SK-N-SH (cell line): ENCODE measurements at regions of chr10 and their contacts with region 1.

Region 1: DNA sequence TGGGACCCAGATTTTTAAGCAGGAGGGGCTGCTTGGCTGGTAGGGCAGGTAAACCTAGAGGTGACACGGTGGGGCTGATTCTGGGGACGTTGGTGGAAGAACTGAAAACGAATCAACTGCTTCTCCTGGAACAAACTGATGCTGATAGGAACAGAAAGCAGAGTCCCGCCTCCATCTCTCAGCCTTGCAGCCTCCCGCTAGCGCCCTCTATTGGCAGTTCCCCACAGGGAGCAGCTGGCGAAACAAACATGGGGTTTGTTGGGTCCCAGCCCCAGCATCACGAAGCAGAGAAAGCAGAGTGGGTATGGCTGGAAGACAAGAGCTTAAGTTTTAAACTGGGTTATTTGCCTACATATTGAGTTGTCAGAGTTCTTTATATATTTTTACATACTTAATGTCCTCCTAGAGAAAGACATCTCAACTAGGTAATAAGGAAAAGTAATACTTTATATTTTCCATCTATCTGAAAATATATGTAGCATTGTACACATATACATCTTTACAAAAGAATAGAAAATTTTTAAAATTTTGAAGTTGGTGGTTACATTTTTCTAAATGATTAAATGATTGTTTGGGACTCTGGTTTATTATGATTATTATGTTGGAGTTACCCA is 42.3 kb upstream of the FOXI2 start:
- DNase-seq: peak; percentile 65
- H3K4me3 ChIP-seq: peak overlapping the region in 1 of 2 experiments; percentile 29; a peak in 1 of 4 replicates
- H3K27ac ChIP-seq: no peak overlapping the region
- H3K4me1 ChIP-seq: no peaks in the 10 kb centered on the region
- H3K27me3 ChIP-seq: no peaks in the 10 kb centered on the region
- CTCF ChIP-seq: peak; percentile 61
- EP300 ChIP-seq: no peak
- RAD21 ChIP-seq: peak; percentile 48

Region 2: GRCh38 chr10:127063762-127064161 is 630.9 kb before region 1 on chr10:
- CTCF ChIA-PET with region 1: no interaction called
- POLR2A ChIA-PET with region 1: no interaction called
- DNase-seq: no peak
- H3K4me3 ChIP-seq: no peak overlapping the region
- H3K27ac ChIP-seq: no peak overlapping the region
- H3K4me1 ChIP-seq: no peaks in the 10 kb centered on the region
- H3K27me3 ChIP-seq: no peaks in the 10 kb centered on the region
- CTCF ChIP-seq: no peak
- EP300 ChIP-seq: no peak
- RAD21 ChIP-seq: no peak

Region 3: GRCh38 chr10:127210936-127211466 is 483.7 kb before region 1 on chr10:
- CTCF ChIA-PET with region 1: no interaction called
- POLR2A ChIA-PET with region 1: no interaction called
- DNase-seq: no peak
- H3K4me3 ChIP-seq: no peak overlapping the region
- H3K27ac ChIP-seq: no peak overlapping the region
- H3K4me1 ChIP-seq: no peaks in the 10 kb centered on the region
- H3K27me3 ChIP-seq: no peaks in the 10 kb centered on the region
- CTCF ChIP-seq: no peak
- EP300 ChIP-seq: no peak
- RAD21 ChIP-seq: no peak

Region 4: GRCh38 chr10:127679642-127680255 is 14.9 kb before region 1 on chr10:
- CTCF ChIA-PET with region 1: interaction called, 11 read pairs
- POLR2A ChIA-PET with region 1: no interaction called
- DNase-seq: no peak
- H3K4me3 ChIP-seq: no peak overlapping the region
- H3K27ac ChIP-seq: no peak overlapping the region
- H3K4me1 ChIP-seq: no peaks in the 10 kb centered on the region
- H3K27me3 ChIP-seq: no peaks in the 10 kb centered on the region
- CTCF ChIP-seq: peak; percentile 33
- EP300 ChIP-seq: no peak
- RAD21 ChIP-seq: peak; percentile 36